A549 (cell line): ENCODE measurements at regions of chrX and their contacts with region 1.

Region 1: GRCh38 chrX:72018277-72019112 is 107.8 kb downstream of the NHSL2 start:
- DNase-seq: peak; percentile 81 to 84
- ATAC-seq: peak; percentile 97
- H3K4me3 ChIP-seq: peak overlapping the region; percentile 33; the same call in 2 of the 3 replicates
- H3K27ac ChIP-seq: peak overlapping the region; percentile 70 to 90
- H3K4me1 ChIP-seq: 0 out of 3 replicates have a peak, but pooled peaks cover 4% of the 10 kb centered on the region
- CTCF ChIP-seq: peak; percentile 88
- EP300 ChIP-seq: no peak
- POLR2A ChIP-seq: no peak
- RAD21 ChIP-seq: peak; percentile 49 to 81; a peak in 4 of 5 replicates

Region 2: DNA sequence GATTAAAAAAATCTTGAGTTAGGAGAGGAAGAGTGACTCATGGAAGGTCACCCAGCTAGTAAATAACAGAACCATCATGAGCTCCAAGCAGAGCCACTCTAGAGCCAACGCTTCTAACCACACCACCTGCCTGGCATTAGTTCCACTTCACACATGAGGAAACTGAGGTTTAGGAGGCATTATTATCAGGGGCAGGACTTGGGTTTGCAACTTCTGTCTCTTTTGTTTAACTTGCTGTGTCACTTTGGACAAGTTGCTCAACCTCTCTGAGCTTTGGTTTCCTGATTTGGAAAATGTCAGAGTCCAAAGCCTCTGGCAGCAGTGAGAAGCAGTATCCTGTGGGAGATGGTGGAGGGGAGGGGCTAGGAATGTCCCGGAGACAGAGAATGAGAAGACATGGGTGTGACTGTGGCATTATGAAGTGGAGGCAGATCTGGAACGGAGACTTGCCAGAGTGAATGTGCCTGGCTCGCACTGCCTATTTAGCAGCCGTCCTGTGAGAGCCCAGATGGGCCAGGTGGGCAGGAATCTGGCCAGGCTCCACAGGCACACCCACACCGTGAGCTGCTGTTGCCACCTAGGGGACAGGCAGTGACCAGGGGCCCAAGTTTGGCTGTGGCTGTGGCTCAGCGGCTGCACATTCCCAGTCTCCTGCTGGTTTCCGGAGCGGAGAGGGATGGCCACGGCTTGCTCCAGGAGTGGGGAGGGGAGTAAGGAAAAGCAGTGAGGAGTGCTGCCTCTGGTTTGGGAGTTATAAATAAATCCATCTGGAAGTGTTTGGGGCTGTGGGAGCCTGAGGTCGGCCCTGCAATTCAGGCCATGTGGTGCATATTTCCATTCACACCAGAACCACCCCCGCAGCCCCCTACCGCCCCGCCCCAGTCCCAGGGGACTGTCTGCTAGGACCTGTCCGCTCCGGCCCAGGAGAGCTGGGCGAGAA is 14.4 kb before region 1 on chrX:
- CTCF ChIA-PET with region 1: interaction called, 39 read pairs
- POLR2A ChIA-PET with region 1: no interaction called
- DNase-seq: peak in 1 of 2 experiments; percentile 39
- ATAC-seq: peak; percentile 90 to 92
- H3K4me3 ChIP-seq: no peak overlapping the region
- H3K27ac ChIP-seq: peak overlapping the region in 1 of 2 experiments; percentile 8; a peak in 1 of 6 replicates
- H3K4me1 ChIP-seq: 0 out of 3 replicates have a peak, but pooled peaks cover 4% of the 10 kb centered on the region
- CTCF ChIP-seq: peak; percentile 30
- EP300 ChIP-seq: no peak
- POLR2A ChIP-seq: no peak
- RAD21 ChIP-seq: peak; percentile 54 to 55

Region 3: DNA sequence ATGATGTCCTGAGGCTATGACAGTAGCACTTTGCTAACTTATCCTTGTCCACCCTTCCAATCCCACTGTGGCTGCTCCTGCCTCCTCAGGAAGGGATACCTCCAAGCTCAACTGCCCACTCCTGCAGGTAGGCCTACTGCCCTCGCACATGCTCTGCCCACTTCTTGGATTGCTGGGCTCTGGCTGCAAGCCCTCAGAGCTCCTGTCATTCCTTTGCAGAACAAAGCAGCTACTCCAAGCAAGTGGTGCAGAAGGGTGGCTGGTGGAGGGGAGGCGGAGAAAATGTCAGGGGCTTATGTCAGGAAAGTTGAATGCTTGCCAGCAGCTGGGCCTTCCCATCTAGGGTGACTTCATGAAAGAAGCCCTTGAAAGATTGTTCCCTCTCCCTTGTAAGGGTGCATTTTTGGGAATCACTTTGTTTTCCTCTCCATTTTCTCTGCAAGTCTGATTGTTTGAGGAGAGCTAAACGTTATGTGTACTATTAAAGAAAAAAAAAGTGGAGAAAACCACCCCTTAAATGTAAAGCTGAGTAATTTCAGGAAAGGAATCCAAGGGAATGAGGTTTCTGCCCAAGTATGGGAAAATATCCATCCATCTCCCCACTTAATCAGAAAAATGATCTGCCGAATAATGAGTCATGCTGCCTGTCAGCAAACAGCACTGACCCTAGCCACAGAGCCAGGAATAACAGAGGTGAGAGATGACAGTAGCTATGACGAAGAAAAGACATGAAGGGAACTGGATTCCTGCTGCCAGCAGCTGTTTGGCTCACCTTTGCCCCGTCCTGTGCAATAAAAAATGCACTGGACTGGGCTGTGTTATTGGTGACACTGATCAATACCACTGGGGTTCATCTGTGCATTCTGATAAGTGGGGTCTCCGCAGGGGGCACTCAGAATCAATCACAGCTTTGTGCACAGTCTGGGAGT is 11.3 kb after region 1 on chrX:
- CTCF ChIA-PET with region 1: interaction called, 43 read pairs
- POLR2A ChIA-PET with region 1: no interaction called
- DNase-seq: peak; percentile 49 to 77
- ATAC-seq: peak; percentile 77 to 88; a peak in 5 of 6 replicates
- H3K4me3 ChIP-seq: no peak overlapping the region
- H3K27ac ChIP-seq: peak overlapping the region; percentile 43 to 82; a peak in 5 of 6 replicates
- H3K4me1 ChIP-seq: peaks cover 36% of the 10 kb centered on the region
- CTCF ChIP-seq: no peak
- EP300 ChIP-seq: no peak
- POLR2A ChIP-seq: no peak
- RAD21 ChIP-seq: no peak